HEK293 (cell line): ENCODE measurements at regions of chr7 and their contacts with region 1.

Region 1: GRCh38 chr7:102398543-102398942 is 2.4 kb downstream of the PRKRIP1 start:
- H3K4me3 ChIP-seq: no peak overlapping the region
- H3K27ac ChIP-seq: no peak overlapping the region
- H3K4me1 ChIP-seq: no peaks in the 10 kb centered on the region
- CTCF ChIP-seq: no peak

Region 2: GRCh38 chr7:102464577-102465280 is 66.2 kb after region 1 on chr7 and contains the starts of genes ALKBH4 and LRWD1:
- CTCF ChIA-PET with region 1: interaction called, 4 read pairs
- POLR2A ChIA-PET with region 1: interaction called, 13 read pairs
- H3K4me3 ChIP-seq: peak within 1 kb of the TSS; percentile 76
- H3K27ac ChIP-seq: peak within 1 kb of the TSS; percentile 60
- H3K4me1 ChIP-seq: no peaks in the 10 kb centered on the region; the same call in 1 of the 2 replicates
- CTCF ChIP-seq: peak; percentile 90